ENCODE measurements at regions of chr1 and their contacts with region 1.

Region 1: DNA sequence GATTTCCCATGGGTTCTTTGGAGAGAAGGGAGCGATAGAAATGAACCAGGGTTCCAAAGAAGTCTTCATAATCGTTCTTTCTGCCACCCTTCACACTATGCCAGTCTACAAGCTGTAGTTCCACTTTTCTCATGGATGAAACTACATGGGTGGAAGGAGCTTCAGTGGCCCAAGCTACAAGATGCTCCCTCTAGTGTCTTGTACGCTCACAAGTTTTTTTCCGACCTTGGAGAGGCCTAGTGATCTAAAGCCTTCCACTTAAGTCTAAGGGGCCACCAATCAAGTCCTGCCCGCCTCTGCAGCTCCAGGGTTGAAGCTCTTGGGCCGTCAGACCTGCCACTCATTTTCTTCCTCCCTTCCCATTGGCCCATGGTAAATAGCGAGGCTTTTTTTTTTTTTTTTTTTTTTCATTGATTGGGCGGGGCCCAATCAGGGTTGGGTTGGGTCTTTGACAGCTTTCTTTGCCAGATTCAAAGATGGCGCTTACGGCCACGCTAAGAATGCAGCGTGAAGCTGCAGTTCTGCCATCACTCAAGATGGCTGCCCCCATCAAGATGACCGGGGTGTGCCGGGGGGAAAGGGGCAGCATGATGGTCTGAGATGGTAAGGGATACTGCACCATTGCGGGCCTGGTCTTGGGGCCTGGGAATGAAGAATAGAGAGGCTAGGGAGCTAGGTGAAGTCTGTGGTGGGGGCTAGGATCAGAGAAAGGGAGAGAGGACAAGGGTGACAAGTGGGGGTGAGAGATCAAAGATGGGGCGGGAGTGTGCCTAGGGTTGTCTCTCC is at the start of gene TOMM40L:
- DNase-seq: peak; percentile 71 to 98 (median 86)
- ATAC-seq: peak; percentile 95
- H3K4me3 ChIP-seq: peak within 1 kb of the TSS; percentile 78 to 95
- H3K4me3 Mint-ChIP-seq: peak within 1 kb of the TSS; percentile 100
- H3K27ac ChIP-seq: peak within 1 kb of the TSS; percentile 43 to 64
- H3K27ac Mint-ChIP-seq: peak within 1 kb of the TSS; percentile 97
- H3K4me1 ChIP-seq: peaks cover 40% of the 10 kb centered on the region
- H3K4me1 Mint-ChIP-seq: peaks cover 46% of the 10 kb centered on the region
- H3K27me3 ChIP-seq: no peaks in the 10 kb centered on the region
- H3K27me3 Mint-ChIP-seq: no peaks in the 10 kb centered on the region
- CTCF ChIP-seq: peak; percentile 63
- total RNA-seq, gene TOMM40L: 4.7 to 4.9 TPM

Region 2: GRCh38 chr1:161045750-161046571 is 179.8 kb before region 1 on chr1 and contains the start of gene USF1:
- CTCF ChIA-PET with region 1: no interaction called
- POLR2A ChIA-PET with region 1: no interaction called
- intact Hi-C with region 1: loop called in 1 of 2 experiments (anchors 5 kb)
- DNase-seq: peak; percentile 88 to 98 (median 92)
- ATAC-seq: peak; percentile 76
- H3K4me3 ChIP-seq: peak within 1 kb of the TSS; percentile 87 to 96
- H3K4me3 Mint-ChIP-seq: peak within 1 kb of the TSS; percentile 98
- H3K27ac ChIP-seq: peak within 1 kb of the TSS; percentile 82 to 91
- H3K27ac Mint-ChIP-seq: peak within 1 kb of the TSS; percentile 100
- H3K4me1 ChIP-seq: peaks cover 24% of the 10 kb centered on the region
- H3K4me1 Mint-ChIP-seq: peaks cover 50% of the 10 kb centered on the region
- H3K27me3 ChIP-seq: no peaks in the 10 kb centered on the region
- H3K27me3 Mint-ChIP-seq: no peaks in the 10 kb centered on the region
- CTCF ChIP-seq: no peak
- total RNA-seq, gene USF1: 95.6 to 98.8 TPM

Region 3: GRCh38 chr1:161185282-161185682 is 40.4 kb before region 1 on chr1:
- CTCF ChIA-PET with region 1: interaction called, 89 read pairs
- POLR2A ChIA-PET with region 1: interaction called, 21 read pairs
- intact Hi-C with region 1: no loop called
- DNase-seq: peak; percentile 59 to 95 (median 81)
- ATAC-seq: peak; percentile 76
- H3K4me3 ChIP-seq: peak overlapping the region; percentile 4 to 60
- H3K4me3 Mint-ChIP-seq: peak overlapping the region; percentile 87
- H3K27ac ChIP-seq: peak overlapping the region; percentile 27 to 88
- H3K27ac Mint-ChIP-seq: peak overlapping the region; percentile 95
- H3K4me1 ChIP-seq: peaks cover 83% of the 10 kb centered on the region
- H3K4me1 Mint-ChIP-seq: peaks cover 79% of the 10 kb centered on the region
- H3K27me3 ChIP-seq: no peaks in the 10 kb centered on the region
- H3K27me3 Mint-ChIP-seq: no peaks in the 10 kb centered on the region
- CTCF ChIP-seq: no peak

Region 4: DNA sequence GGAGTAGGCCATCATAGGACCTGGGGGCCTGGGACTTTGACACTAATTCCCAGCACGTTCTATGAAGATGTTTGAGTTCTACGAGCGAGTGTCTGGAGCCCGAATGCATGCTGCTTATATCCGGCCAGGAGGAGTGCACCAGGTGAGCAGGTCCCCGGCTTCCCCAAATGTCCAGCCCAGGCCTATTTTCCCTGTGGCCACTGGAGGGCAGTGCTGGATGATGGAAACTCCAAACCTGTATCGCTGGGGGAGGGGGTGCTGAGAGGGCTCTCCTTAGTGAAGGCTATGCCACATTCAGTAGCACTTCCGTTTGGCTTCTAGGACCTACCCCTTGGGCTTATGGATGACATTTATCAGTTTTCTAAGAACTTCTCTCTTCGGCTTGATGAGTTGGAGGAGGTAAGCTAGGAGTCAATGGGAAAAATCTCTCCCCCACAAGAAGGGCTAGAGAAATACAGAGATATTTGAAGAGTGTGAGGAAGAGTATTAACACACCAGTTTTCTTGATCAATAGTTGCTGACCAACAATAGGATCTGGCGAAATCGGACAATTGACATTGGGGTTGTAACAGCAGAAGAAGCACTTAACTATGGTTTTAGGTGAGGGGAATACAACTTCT is 15.8 kb before region 1 on chr1:
- CTCF ChIA-PET with region 1: interaction called, 94 read pairs
- POLR2A ChIA-PET with region 1: interaction called, 6 read pairs
- intact Hi-C with region 1: loop called (anchors 1 kb)
- DNase-seq: peak; percentile 48 to 85 (median 74)
- ATAC-seq: peak; percentile 99
- H3K4me3 ChIP-seq: no peak overlapping the region
- H3K4me3 Mint-ChIP-seq: no peak overlapping the region
- H3K27ac ChIP-seq: peak overlapping the region in 1 of 2 experiments; percentile 11
- H3K27ac Mint-ChIP-seq: peak overlapping the region; percentile 50
- H3K4me1 ChIP-seq: peaks cover 20% of the 10 kb centered on the region
- H3K4me1 Mint-ChIP-seq: peaks cover 37% of the 10 kb centered on the region
- H3K27me3 ChIP-seq: no peaks in the 10 kb centered on the region
- H3K27me3 Mint-ChIP-seq: no peaks in the 10 kb centered on the region
- CTCF ChIP-seq: peak; percentile 60

Region 5: GRCh38 chr1:161314201-161314981 is 88.7 kb after region 1 on chr1 and contains the start of gene SDHC:
- CTCF ChIA-PET with region 1: interaction called, 26 read pairs
- POLR2A ChIA-PET with region 1: interaction called, 8 read pairs
- intact Hi-C with region 1: loop called (anchors 2 kb)
- DNase-seq: peak; percentile 79 to 95 (median 92)
- ATAC-seq: peak; percentile 95
- H3K4me3 ChIP-seq: peak within 1 kb of the TSS; percentile 63 to 90
- H3K4me3 Mint-ChIP-seq: peak within 1 kb of the TSS; percentile 97
- H3K27ac ChIP-seq: peak within 1 kb of the TSS; percentile 88 to 98
- H3K27ac Mint-ChIP-seq: peak within 1 kb of the TSS; percentile 99
- H3K4me1 ChIP-seq: peaks cover 14% of the 10 kb centered on the region
- H3K4me1 Mint-ChIP-seq: peaks cover 25% of the 10 kb centered on the region
- H3K27me3 ChIP-seq: no peaks in the 10 kb centered on the region
- H3K27me3 Mint-ChIP-seq: no peaks in the 10 kb centered on the region
- CTCF ChIP-seq: peak; percentile 38
- total RNA-seq, gene SDHC: 41.5 to 41.9 TPM

Region 6: GRCh38 chr1:161389691-161390558 is 164.2 kb after region 1 on chr1:
- CTCF ChIA-PET with region 1: interaction called, 191 read pairs
- POLR2A ChIA-PET with region 1: no interaction called
- intact Hi-C with region 1: no loop called
- DNase-seq: peak; percentile 85 to 97 (median 96)
- ATAC-seq: peak; percentile 90
- H3K4me3 ChIP-seq: peak overlapping the region; percentile 76 to 96
- H3K4me3 Mint-ChIP-seq: peak overlapping the region; percentile 92
- H3K27ac ChIP-seq: peak overlapping the region; percentile 85 to 97
- H3K27ac Mint-ChIP-seq: peak overlapping the region; percentile 99
- H3K4me1 ChIP-seq: peaks cover 19% of the 10 kb centered on the region
- H3K4me1 Mint-ChIP-seq: peaks cover 26% of the 10 kb centered on the region
- H3K27me3 ChIP-seq: no peaks in the 10 kb centered on the region
- H3K27me3 Mint-ChIP-seq: no peaks in the 10 kb centered on the region
- CTCF ChIP-seq: no peak